ENCODE measurements at regions of chr7 and their contacts with region 1.

Region 1: DNA sequence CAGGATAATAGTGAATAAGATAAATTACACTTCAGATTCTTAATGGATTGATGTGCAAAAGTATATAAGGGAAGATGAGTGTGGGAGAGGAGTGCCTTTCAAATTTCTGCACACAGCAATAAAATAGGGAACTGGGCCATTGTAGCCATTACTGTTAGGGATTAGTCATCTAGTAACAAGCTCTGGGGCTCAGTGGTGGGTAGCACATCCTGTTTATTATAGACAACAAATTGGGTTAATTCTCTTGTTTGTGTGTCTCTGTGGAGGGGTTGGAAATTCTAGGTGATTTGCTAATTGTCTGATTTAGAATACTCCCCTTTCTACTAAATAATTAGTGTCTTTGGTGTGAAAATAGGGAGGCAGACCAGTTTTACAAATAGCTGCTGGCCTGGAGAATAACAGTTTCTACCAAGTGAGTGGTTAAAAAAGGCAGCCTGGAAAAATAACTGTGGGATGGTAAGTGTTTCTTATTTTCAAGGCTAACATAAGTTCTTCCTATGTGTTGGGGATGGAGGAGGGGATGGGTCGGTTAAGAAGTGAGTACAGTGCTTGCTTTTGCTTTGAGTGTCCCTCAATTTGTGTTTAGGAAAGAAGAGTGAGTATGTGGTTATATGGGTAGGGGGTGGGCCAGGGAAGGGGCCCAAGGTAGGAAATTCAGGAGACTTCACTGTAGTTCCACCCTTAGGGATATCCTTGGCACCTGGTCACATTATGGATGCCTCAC is 43.3 kb upstream of the TMEM248 start:
- H3K4me3 ChIP-seq: no peak overlapping the region
- H3K27ac ChIP-seq: no peak overlapping the region
- H3K4me1 ChIP-seq: no peaks in the 10 kb centered on the region
- CTCF ChIP-seq: no peak

Region 2: GRCh38 chr7:67008260-67008659 is 130.5 kb after region 1 on chr7:
- CTCF ChIA-PET with region 1: no interaction called
- POLR2A ChIA-PET with region 1: no interaction called
- H3K4me3 ChIP-seq: no peak overlapping the region
- H3K27ac ChIP-seq: no peak overlapping the region
- H3K4me1 ChIP-seq: no peaks in the 10 kb centered on the region
- CTCF ChIP-seq: no peak

Region 3: DNA sequence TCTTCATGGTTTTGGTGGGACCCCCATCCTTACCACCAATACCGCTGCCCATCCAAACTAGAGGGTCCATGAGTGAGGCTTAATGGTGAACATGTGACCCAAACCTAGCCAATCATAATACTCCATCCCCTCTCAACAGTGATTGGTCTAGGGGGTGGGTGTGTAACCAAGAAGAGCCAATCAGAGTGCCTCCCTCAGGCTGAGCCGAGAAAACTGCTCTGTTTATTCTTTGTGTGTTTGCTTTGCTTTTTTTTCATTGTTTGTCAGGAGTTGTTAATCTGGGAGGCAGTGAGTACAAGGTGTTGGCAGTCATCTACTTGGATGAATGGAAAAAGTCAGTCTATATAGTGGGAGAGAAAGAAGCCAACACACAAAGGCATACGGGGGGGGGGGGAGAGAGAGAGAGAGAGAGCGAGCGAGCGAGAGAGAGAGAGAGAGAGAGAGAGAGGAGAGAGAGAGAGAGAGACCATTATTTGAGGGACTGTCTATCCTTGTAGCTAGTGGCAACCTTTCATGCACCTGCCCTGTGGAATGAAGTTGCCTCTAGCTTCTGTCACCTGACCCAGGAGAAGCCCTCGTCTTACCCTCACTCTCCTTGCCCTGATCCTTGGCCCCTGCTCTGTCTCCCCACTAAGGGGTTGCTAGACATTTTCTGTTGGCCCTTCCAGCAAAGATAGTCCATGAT is 560.6 kb after region 1 on chr7:
- CTCF ChIA-PET with region 1: no interaction called
- POLR2A ChIA-PET with region 1: interaction called, 12 read pairs
- H3K4me3 ChIP-seq: no peak overlapping the region
- H3K27ac ChIP-seq: no peak overlapping the region
- H3K4me1 ChIP-seq: no peaks in the 10 kb centered on the region
- CTCF ChIP-seq: no peak